Activated CD4-positive, alpha-beta memory T cell treated with anti-CD3 and anti-CD28 coated beads for 36 hours (primary cell): ENCODE measurements at regions of chr1 and their contacts with region 1.

Region 1: GRCh38 chr1:211514030-211514754 is 22.2 kb upstream of the RD3 start:
- DNase-seq: peak; percentile 88
- H3K4me3 Mint-ChIP-seq: peak overlapping the region; percentile 56
- H3K27ac Mint-ChIP-seq: no peak overlapping the region
- H3K4me1 Mint-ChIP-seq: peaks cover 23% of the 10 kb centered on the region
- H3K27me3 Mint-ChIP-seq: no peaks in the 10 kb centered on the region

Region 2: DNA sequence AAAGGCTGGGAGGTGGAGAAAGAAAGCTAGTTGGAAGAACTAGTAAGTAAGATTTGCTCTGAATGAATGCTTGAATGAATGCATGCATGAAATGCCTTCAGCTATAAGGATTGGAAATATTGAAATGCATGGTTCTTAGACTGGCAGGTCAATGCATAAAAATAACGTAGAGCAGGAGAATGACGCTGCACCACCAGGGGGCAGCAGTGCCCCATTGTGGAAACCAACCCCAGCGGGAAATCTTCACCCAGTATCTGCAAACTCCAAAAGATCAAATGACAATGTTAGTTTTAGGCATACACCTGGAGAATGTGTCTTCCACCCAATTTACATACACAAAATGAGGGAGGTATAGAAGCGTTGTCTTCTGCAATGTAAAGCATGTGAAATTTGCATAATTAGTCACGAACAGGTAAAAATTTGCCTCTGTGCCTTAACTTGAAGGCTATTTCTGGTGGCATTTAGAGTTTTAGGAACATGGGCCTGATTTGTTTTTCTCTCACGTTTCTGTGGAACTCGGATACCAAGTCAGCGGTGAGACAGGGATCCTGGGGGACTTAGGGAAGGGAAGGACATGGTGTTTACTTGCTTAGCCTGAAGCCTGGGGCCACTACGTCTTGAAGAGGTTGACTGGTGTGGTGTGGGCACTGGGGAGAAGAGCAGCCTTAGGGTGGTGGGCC is 1106.8 kb before region 1 on chr1:
- CTCF ChIA-PET with region 1: interaction called, 5 read pairs
- POLR2A ChIA-PET with region 1: no interaction called
- intact Hi-C with region 1: loop called (anchors 1 kb)
- DNase-seq: peak; percentile 84
- H3K4me3 Mint-ChIP-seq: no peak overlapping the region
- H3K27ac Mint-ChIP-seq: no peak overlapping the region
- H3K4me1 Mint-ChIP-seq: peaks cover 2% of the 10 kb centered on the region
- H3K27me3 Mint-ChIP-seq: no peaks in the 10 kb centered on the region

Region 3: GRCh38 chr1:211133836-211134669 is 380.1 kb before region 1 on chr1 and contains the start of gene KCNH1:
- CTCF ChIA-PET with region 1: interaction called, 18 read pairs
- POLR2A ChIA-PET with region 1: no interaction called
- intact Hi-C with region 1: loop called (anchors 1 kb)
- DNase-seq: peak; percentile 90
- H3K4me3 Mint-ChIP-seq: peak within 1 kb of the TSS; percentile 63
- H3K27ac Mint-ChIP-seq: no peak within 1 kb of the TSS
- H3K4me1 Mint-ChIP-seq: peaks cover 10% of the 10 kb centered on the region
- H3K27me3 Mint-ChIP-seq: peaks cover 34% of the 10 kb centered on the region
- total RNA-seq, gene KCNH1: not detected

Region 4: GRCh38 chr1:211382714-211383480 is 131.3 kb before region 1 on chr1:
- CTCF ChIA-PET with region 1: interaction called, 6 read pairs
- POLR2A ChIA-PET with region 1: no interaction called
- intact Hi-C with region 1: loop called (anchors 1 kb)
- DNase-seq: peak; percentile 88
- H3K4me3 Mint-ChIP-seq: peak overlapping the region; percentile 78
- H3K27ac Mint-ChIP-seq: peak overlapping the region; percentile 88
- H3K4me1 Mint-ChIP-seq: peaks cover 42% of the 10 kb centered on the region
- H3K27me3 Mint-ChIP-seq: no peaks in the 10 kb centered on the region

Region 5: GRCh38 chr1:211469938-211470529 is 44.2 kb before region 1 on chr1:
- CTCF ChIA-PET with region 1: interaction called, 23 read pairs
- POLR2A ChIA-PET with region 1: no interaction called
- intact Hi-C with region 1: loop called (anchors 1 kb)
- DNase-seq: peak; percentile 57
- H3K4me3 Mint-ChIP-seq: no peak overlapping the region
- H3K27ac Mint-ChIP-seq: no peak overlapping the region
- H3K4me1 Mint-ChIP-seq: no peaks in the 10 kb centered on the region
- H3K27me3 Mint-ChIP-seq: no peaks in the 10 kb centered on the region

Region 6: DNA sequence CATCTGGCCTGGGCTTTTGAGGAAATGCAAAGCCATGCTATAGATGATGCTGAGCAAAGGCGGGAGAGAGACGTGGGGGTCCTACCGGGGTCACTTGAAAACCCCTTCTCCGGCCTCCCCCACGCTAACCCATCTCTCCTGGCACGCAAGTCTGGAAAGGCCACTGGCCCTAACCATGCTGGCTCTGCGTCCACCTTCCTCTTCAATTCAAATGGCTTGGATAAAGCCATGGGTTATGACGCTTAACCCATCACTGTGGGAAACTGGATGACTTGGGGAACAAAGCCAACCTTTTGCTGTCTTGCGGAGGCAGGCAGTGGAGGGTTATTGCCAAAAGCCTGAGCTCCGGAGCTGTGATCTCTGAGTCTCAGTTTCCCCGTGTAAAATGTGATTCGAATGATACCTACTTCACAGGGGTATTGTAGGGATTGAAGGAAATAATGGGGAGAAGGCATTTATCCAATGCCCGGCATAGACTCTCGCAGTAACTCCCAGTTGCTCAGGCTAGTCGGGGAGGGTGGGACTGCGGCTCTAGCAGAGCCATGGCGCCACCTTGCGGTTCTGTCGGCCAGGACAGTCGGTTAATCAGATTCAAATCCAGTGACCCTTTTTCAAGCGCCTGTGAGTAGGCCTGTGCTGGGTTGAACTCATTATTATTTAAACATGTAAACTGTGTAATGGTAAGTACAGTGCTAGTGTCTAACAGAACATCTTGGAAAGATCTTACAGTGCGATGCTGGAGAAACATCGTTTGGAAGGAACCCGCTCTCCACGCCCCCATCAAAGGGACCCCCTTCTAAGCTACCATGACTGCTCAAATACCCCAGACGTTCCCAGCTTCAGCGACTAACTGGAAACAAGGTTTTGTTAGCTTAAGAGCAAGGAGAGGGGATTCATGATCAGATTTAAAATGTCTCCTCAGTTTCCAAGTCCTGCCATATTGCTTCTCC is 140.9 kb after region 1 on chr1:
- CTCF ChIA-PET with region 1: interaction called, 73 read pairs
- POLR2A ChIA-PET with region 1: no interaction called
- intact Hi-C with region 1: loop called (anchors 1 kb)
- DNase-seq: peak; percentile 87
- H3K4me3 Mint-ChIP-seq: no peak overlapping the region
- H3K27ac Mint-ChIP-seq: no peak overlapping the region
- H3K4me1 Mint-ChIP-seq: no peaks in the 10 kb centered on the region
- H3K27me3 Mint-ChIP-seq: no peaks in the 10 kb centered on the region